ENCODE measurements at regions of chr12 and their contacts with region 1.

Region 1: GRCh38 chr12:121955258-121956235 is 37.2 kb downstream of the CFAP251 start:
- DNase-seq: peak; percentile 41
- ATAC-seq: 0 out of 2 replicates have a peak, but pooled peaks have one; percentile 33
- H3K4me3 ChIP-seq: no peak overlapping the region
- H3K27ac ChIP-seq: no peak overlapping the region
- H3K4me1 ChIP-seq: peaks cover 12% of the 10 kb centered on the region
- H3K27me3 ChIP-seq: no peaks in the 10 kb centered on the region
- CTCF ChIP-seq: peak; percentile 55
- POLR2A ChIP-seq: no peak
- RAD21 ChIP-seq: peak; percentile 47

Region 2: GRCh38 chr12:122003651-122004611 is 48.4 kb after region 1 on chr12:
- CTCF ChIA-PET with region 1: no interaction called
- POLR2A ChIA-PET with region 1: no interaction called
- dilution Hi-C with region 1: no loop called
- in situ Hi-C with region 1: no loop called
- intact Hi-C with region 1: no loop called
- DNase-seq: no peak
- ATAC-seq: peak; percentile 65
- H3K4me3 ChIP-seq: no peak overlapping the region
- H3K27ac ChIP-seq: peak overlapping the region; percentile 29; the same call in 1 of the 2 replicates
- H3K4me1 ChIP-seq: peaks cover 14% of the 10 kb centered on the region
- H3K27me3 ChIP-seq: no peaks in the 10 kb centered on the region
- CTCF ChIP-seq: no peak
- POLR2A ChIP-seq: no peak
- RAD21 ChIP-seq: no peak

Region 3: DNA sequence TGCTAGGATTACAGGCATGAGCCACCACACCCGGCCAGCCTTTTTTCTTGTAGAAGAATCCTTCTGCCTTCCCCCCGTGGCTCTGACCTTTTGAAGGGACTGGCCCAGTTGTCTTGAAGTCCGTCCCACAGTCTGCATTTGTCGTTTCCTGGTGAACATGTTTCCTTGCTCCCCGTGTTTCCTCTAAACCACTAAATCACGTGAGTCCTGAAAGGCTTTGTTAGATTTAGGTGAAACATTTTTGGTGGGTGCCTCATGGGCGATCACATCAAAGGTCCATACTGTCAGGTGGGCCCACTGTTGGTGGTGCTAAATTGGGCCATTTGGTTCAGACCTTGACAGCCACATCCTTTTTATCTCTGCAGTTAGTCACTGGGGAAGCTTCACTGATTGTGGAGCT is 149.3 kb after region 1 on chr12:
- CTCF ChIA-PET with region 1: interaction called, 10 read pairs
- POLR2A ChIA-PET with region 1: no interaction called
- dilution Hi-C with region 1: no loop called
- in situ Hi-C with region 1: no loop called
- intact Hi-C with region 1: no loop called
- DNase-seq: no peak
- ATAC-seq: no peak
- H3K4me3 ChIP-seq: no peak overlapping the region
- H3K27ac ChIP-seq: no peak overlapping the region
- H3K4me1 ChIP-seq: peaks cover 16% of the 10 kb centered on the region
- H3K27me3 ChIP-seq: no peaks in the 10 kb centered on the region
- CTCF ChIP-seq: no peak
- POLR2A ChIP-seq: no peak
- RAD21 ChIP-seq: no peak